AG04450 (cell line): ENCODE measurements at regions of chr10 and their contacts with region 1.

Region 1: GRCh38 chr10:44513591-44513990 is 128.7 kb upstream of the CXCL12 start:
- DNase-seq: no peak
- H3K4me3 ChIP-seq: no peak overlapping the region
- H3K27ac ChIP-seq: no peak overlapping the region
- H3K27me3 ChIP-seq: no peaks in the 10 kb centered on the region
- CTCF ChIP-seq: peak; percentile 29

Region 2: DNA sequence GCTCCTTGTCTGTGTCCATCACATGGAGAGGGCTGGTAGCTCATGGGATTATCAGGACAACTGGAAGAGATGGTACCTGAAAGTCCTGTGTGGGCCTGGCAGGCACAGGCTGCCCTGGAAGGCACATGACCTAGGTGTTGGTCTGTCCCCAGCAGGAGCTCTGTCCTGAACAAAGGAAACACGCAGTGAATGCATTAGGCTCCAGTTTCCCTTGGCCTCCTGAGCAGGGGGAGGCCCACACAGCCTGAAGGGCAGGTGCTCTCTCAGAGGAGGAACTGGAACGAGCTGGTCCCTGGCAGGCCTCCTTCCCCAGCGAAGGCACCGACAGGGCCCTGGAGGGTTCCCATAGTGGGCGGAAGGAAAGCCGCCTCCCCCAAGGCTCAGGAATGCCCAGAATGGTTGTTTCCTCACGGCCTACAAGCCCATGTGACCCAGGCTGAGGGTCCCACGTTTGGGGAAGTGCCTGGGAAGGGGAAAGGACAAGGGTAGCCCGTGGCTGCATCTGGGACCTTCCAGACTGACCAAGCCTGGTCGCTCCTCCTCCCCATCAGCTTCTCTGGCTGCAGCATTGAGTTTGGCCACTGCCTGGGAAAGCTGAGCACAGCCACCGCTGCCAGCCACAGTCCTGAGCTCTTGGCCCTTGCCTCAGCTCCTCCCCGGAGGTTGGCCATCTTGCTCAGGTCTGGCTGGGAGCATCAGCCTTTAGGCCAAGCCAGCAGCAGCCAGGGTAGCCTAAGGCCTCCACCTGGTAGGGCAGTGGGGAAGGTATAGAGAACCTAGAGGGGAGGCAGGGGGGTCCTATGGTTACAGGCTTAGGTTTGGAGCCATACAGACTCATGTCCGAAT is 150.5 kb before region 1 on chr10:
- CTCF ChIA-PET with region 1: no interaction called
- POLR2A ChIA-PET with region 1: interaction called, 11 read pairs
- DNase-seq: no peak
- H3K4me3 ChIP-seq: no peak overlapping the region
- H3K27ac ChIP-seq: no peak overlapping the region
- H3K27me3 ChIP-seq: peaks cover 8% of the 10 kb centered on the region
- CTCF ChIP-seq: no peak

Region 3: GRCh38 chr10:44492662-44493061 is 20.9 kb before region 1 on chr10:
- CTCF ChIA-PET with region 1: no interaction called
- POLR2A ChIA-PET with region 1: no interaction called
- DNase-seq: no peak
- H3K4me3 ChIP-seq: no peak overlapping the region
- H3K27ac ChIP-seq: no peak overlapping the region
- H3K27me3 ChIP-seq: no peaks in the 10 kb centered on the region
- CTCF ChIP-seq: no peak